CD8-positive, alpha-beta memory T cell (primary cell): ENCODE measurements at regions of chr5 and their contacts with region 1.

Region 1: DNA sequence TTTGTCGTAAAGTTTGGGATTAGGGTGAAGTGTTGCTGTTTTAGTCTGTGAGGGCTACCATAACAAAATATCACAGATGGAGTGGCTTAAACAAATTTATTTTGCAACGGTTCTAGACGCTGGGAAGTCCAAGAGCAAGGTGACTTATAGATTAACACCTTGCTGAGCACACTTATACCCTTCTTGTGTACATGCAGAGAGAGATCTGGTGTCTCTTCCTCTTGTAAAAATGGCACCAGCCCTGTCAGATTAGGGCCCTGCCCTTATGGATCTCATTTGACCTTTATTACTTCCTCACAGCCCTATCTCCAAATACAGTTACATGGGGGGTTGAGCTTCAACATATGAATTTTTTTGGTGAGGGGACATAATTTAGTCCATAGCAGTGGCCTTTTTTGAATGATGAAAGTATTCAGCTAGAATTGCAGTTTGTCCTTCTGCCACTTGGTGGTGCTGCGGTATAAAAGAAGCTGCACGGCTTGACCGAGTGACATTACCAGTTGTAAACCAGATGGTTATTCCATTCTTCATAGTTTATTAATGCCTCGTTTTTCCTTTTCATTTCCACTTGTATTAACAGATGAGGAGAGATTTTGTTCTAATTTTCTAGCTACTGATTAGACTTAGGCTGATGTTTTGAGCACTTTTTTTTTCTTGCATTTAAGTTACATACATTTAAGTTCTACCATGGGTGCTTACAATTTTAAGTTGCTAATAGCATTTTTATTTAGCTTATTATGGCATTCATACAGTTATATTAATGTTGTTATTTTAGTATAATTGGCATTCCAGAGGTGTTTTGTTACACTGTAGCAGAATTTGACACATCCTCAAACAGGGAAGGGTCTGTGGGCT is 19.4 kb downstream of the DCP2 start:
- DNase-seq: peak; percentile 61 to 78 (median 67)
- H3K4me3 ChIP-seq: no peak overlapping the region
- H3K4me3 Mint-ChIP-seq: peak overlapping the region in 3 of 7 donors; percentile 1 to 44 (median 38)
- H3K27ac ChIP-seq: no peak overlapping the region
- H3K27ac Mint-ChIP-seq: peak overlapping the region in 5 of 8 donors; percentile 15 to 77 (median 56)
- H3K4me1 ChIP-seq: no peaks in the 10 kb centered on the region
- H3K4me1 Mint-ChIP-seq: peaks cover 28 to 43% (median 40%) of the 10 kb centered on the region in 3 donors
- H3K27me3 ChIP-seq: no peaks in the 10 kb centered on the region
- H3K27me3 Mint-ChIP-seq: no peaks in the 10 kb centered on the region

Region 2: DNA sequence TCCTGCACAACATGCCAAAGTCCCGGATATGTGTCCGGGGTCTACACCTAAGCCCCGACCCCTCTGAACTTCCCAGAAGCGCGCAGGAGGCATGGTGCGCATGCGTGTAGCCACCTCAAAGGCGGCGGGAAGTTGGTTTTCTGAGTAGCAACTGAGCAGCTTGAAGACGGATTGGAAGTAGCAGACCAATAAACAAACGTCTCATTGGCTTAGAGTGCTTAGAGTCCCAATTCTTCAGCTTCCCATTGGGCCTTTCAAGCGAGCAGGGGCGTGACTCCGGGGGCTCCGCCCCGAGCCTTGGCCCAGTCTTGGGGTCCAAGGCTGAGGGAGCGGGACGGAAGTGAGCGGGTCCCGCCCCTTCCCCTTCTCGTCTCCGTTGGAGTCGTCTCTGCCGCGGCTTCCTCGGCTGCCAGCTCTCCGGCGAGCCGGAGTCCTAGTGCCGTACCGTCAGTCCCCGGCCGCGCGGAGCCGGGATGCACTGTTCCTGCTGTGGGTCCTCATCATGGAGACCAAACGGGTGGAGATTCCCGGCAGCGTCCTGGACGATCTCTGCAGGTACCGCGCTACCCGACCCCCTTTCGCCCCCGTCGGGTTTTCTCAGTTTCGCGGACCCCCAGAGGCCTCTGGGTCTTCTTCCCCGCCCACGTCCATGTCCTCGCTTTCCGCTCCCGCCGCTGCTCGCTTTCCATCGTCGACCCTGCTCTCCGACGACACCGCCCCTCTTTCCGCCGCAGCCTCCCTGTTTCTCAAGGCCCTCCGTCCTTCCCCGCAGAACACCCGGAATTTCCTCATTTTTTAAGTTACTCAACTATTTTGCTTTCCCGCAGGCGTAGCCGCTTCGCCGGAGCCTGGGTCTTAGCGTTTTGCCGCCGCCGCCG is 19.3 kb before region 1 on chr5 and contains the start of gene DCP2:
- CTCF ChIA-PET with region 1: interaction called, 22 read pairs
- POLR2A ChIA-PET with region 1: interaction called, 3 read pairs
- DNase-seq: peak; percentile 91 to 97 (median 97)
- H3K4me3 ChIP-seq: peak within 1 kb of the TSS; percentile 74
- H3K4me3 Mint-ChIP-seq: peak within 1 kb of the TSS; percentile 93 to 99 (median 98)
- H3K27ac ChIP-seq: peak within 1 kb of the TSS; percentile 84
- H3K27ac Mint-ChIP-seq: peak within 1 kb of the TSS; percentile 91 to 99 (median 96)
- H3K4me1 ChIP-seq: peaks cover 48% of the 10 kb centered on the region
- H3K4me1 Mint-ChIP-seq: peaks cover 43 to 57% (median 55%) of the 10 kb centered on the region in 3 donors
- H3K27me3 ChIP-seq: no peaks in the 10 kb centered on the region
- H3K27me3 Mint-ChIP-seq: peaks cover 0 to 2% of the 10 kb centered on the region in 2 donors
- total RNA-seq, gene DCP2: 54.5 to 61.5 TPM

Region 3: DNA sequence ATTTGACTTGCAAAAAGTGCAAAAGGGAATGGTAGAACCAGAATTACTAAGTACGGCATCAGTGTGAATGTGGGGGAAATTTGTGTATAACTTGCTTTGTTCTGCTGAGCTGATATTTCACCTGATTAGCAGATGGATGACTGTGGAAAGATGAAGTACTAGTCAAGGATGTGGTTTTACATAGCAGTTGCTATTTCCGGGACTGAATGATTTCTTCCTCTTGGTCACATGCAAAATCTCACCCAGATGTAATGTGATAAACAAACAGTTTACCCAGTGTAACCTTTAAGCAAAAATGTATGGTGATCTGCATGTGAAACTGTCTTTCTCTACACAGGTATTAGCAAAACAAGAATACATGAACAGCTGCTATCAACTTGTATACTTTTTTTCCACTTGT is 26.7 kb after region 1 on chr5:
- CTCF ChIA-PET with region 1: interaction called, 12 read pairs
- POLR2A ChIA-PET with region 1: interaction called, 4 read pairs
- DNase-seq: peak in 2 of 5 donors; percentile 61 to 74
- H3K4me3 ChIP-seq: no peak overlapping the region
- H3K4me3 Mint-ChIP-seq: peak overlapping the region; percentile 17 to 71 (median 65)
- H3K27ac ChIP-seq: no peak overlapping the region
- H3K27ac Mint-ChIP-seq: peak overlapping the region; percentile 64 to 92 (median 82)
- H3K4me1 ChIP-seq: peaks cover 61% of the 10 kb centered on the region
- H3K4me1 Mint-ChIP-seq: peaks cover 71 to 78% (median 74%) of the 10 kb centered on the region in 3 donors
- H3K27me3 ChIP-seq: no peaks in the 10 kb centered on the region
- H3K27me3 Mint-ChIP-seq: no peaks in the 10 kb centered on the region

Region 4: DNA sequence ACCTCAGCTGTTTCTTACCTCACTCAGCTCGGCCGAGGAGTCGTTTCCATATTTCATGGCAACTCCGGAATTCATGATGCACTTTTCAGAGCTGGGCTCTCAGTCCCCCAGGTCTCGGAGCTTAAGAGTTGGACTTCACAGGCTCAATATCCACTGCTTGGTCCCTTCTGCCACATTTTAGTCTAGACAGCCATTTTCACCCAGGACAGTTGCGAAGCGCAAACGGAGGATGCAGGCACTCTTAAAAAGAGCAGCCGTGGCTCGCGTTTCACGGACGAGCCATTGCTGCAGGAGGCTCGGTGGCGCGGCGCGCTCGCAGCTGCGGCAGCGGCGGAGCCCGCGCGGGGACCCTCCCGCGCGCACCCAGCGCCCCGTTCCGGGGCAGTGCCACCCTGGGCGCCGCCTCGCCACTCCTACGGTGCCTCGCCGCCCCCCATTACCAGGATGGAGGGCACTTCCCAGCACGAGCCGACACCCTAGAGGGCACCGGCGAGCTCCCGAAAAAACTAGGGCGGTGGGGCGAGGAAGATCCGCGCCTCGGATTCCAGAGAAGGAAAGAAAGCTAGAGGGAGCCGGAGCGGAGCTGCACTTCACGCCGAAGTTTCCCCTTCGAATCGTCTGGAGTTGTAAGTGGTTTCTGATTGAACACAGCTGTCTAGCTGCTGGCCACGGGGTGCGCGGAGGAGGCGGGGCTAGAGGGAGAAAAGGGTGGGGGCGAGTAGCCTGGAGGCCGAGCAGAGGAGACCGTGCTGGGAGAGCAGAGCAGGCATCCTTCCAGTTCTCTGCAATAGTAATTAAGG is 298.5 kb after region 1 on chr5:
- CTCF ChIA-PET with region 1: interaction called, 11 read pairs
- POLR2A ChIA-PET with region 1: no interaction called
- DNase-seq: peak; percentile 53 to 80 (median 63)
- H3K4me3 ChIP-seq: peak overlapping the region; percentile 79
- H3K4me3 Mint-ChIP-seq: peak overlapping the region; percentile 87 to 98 (median 96)
- H3K27ac ChIP-seq: peak overlapping the region; percentile 18
- H3K27ac Mint-ChIP-seq: peak overlapping the region; percentile 9 to 92 (median 84)
- H3K4me1 ChIP-seq: peaks cover 17% of the 10 kb centered on the region
- H3K4me1 Mint-ChIP-seq: peaks cover 21 to 28% (median 27%) of the 10 kb centered on the region in 3 donors
- H3K27me3 ChIP-seq: peaks cover 22% of the 10 kb centered on the region
- H3K27me3 Mint-ChIP-seq: peaks cover 10 to 27% of the 10 kb centered on the region in 2 donors

Region 5: GRCh38 chr5:113330533-113331208 is 334.7 kb after region 1 on chr5:
- CTCF ChIA-PET with region 1: interaction called, 45 read pairs
- POLR2A ChIA-PET with region 1: interaction called, 4 read pairs
- DNase-seq: peak in 2 of 5 donors; percentile 60
- H3K4me3 ChIP-seq: no peak overlapping the region
- H3K4me3 Mint-ChIP-seq: peak overlapping the region in 4 of 7 donors; percentile 33 to 61 (median 50)
- H3K27ac ChIP-seq: no peak overlapping the region
- H3K27ac Mint-ChIP-seq: peak overlapping the region in 5 of 8 donors; percentile 3 to 43 (median 22)
- H3K4me1 ChIP-seq: peaks cover 4% of the 10 kb centered on the region
- H3K4me1 Mint-ChIP-seq: peaks cover 10 to 24% (median 14%) of the 10 kb centered on the region in 3 donors
- H3K27me3 ChIP-seq: no peaks in the 10 kb centered on the region
- H3K27me3 Mint-ChIP-seq: peaks cover under 1 to 2% of the 10 kb centered on the region in 2 donors

Region 6: DNA sequence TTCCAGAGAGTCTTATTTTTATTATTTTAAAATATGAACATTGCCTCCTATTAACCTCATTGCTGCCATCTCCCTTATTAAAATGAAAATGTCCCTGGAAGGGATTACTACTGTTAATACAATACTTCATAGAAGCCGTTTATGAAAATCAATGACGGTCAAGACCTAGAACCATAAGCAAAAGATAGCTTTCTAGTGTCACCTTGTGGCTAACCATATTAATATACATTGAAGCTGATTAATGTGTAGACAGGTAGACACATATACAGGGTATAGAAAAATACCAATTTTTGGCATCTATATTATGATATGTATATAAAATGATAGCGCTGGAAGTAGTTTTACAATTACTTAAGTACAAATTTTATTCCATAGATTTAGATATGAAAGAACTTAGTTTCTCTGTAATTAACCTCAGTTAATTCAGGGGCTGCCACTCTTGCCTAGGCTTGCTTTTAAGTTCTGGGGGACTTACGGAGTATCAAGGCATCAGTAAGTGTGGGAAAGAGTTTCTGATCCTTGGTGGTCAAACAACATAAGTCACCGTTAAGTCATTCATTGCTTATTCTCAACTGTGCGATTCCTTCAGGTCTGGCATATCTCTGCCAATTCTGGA is 515.0 kb after region 1 on chr5:
- CTCF ChIA-PET with region 1: interaction called, 10 read pairs
- POLR2A ChIA-PET with region 1: interaction called, 4 read pairs
- DNase-seq: no peak
- H3K4me3 ChIP-seq: no peak overlapping the region
- H3K4me3 Mint-ChIP-seq: peak overlapping the region in 1 of 7 donors; percentile 15
- H3K27ac ChIP-seq: no peak overlapping the region
- H3K27ac Mint-ChIP-seq: peak overlapping the region in 1 of 8 donors; percentile 46
- H3K4me1 ChIP-seq: peaks cover 14% of the 10 kb centered on the region
- H3K4me1 Mint-ChIP-seq: peaks cover 21 to 29% (median 27%) of the 10 kb centered on the region in 3 donors
- H3K27me3 ChIP-seq: no peaks in the 10 kb centered on the region
- H3K27me3 Mint-ChIP-seq: peaks cover 5 to 43% of the 10 kb centered on the region in 2 donors

Region 7: DNA sequence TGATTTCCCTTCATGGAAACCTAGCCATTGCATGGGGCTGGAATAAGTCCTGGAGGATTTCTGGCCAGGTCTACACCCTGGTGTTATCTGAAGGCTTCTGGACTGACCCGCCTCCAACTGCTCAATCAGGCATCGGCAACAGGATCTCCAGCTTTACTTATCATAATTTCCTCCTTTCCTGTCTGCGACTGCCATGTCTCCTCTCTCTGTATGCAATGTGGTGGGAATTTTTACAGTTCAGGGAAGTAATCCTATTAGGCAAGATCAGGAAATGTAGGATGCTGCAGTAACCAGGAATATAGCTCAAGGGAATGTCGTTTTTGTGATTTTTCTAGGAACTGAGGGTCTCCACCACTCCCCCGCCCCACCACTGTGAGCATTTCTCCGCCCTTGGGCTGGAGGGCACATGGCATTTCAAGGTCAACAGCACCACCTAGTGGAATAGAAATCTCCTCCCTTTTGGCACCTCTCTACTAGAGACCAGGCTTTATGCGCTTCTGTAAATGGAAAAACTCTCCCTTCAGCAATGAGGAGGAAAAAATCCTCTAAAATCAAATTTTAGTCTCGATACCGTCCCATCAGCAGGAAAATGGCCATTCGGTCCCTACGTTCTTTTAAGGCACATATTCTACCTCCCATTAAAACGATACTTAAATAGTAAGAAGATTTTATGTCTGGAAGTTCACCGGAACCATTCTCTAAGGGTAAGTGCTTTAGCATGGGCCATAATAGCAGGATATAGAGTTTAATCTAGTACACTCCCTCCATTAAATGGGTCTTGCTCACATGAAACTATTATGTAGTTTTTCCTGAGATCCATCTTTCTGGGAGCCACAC is 610.5 kb after region 1 on chr5:
- CTCF ChIA-PET with region 1: interaction called, 14 read pairs
- POLR2A ChIA-PET with region 1: no interaction called
- DNase-seq: peak; percentile 6 to 55 (median 36)
- H3K4me3 ChIP-seq: no peak overlapping the region
- H3K4me3 Mint-ChIP-seq: no peak overlapping the region
- H3K27ac ChIP-seq: no peak overlapping the region
- H3K27ac Mint-ChIP-seq: no peak overlapping the region
- H3K4me1 ChIP-seq: peaks cover 5% of the 10 kb centered on the region
- H3K4me1 Mint-ChIP-seq: peaks cover 0 to 5% (median 3%) of the 10 kb centered on the region in 3 donors
- H3K27me3 ChIP-seq: peaks cover 6% of the 10 kb centered on the region
- H3K27me3 Mint-ChIP-seq: peaks cover 5 to 38% of the 10 kb centered on the region in 2 donors

Region 8: DNA sequence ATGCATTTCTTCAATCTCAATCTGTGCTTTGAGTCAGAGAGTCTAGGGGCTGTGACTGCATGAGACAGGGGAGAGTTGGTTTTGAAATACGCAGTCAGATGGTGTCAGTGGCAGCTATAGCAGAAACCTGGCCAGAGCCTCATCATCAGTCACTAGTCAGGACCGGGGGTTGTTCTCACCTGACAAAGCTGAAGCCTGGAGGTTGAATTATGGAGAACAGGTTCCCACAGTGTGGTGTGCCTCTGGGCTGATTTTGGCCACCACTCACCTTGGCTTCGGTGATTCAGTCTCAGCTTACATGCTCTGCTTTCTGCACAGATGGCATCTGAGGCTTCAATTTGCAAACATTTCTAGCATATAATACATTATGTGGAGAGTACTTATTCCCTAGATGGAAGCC is 904.8 kb after region 1 on chr5:
- CTCF ChIA-PET with region 1: no interaction called
- POLR2A ChIA-PET with region 1: no interaction called
- DNase-seq: no peak
- H3K4me3 ChIP-seq: no peak overlapping the region
- H3K4me3 Mint-ChIP-seq: no peak overlapping the region
- H3K27ac ChIP-seq: no peak overlapping the region
- H3K27ac Mint-ChIP-seq: no peak overlapping the region
- H3K4me1 ChIP-seq: no peaks in the 10 kb centered on the region
- H3K4me1 Mint-ChIP-seq: no peaks in the 10 kb centered on the region
- H3K27me3 ChIP-seq: no peaks in the 10 kb centered on the region
- H3K27me3 Mint-ChIP-seq: no peaks in the 10 kb centered on the region